ENCODE measurements at regions of chr19 and their contacts with region 1.

Region 1: DNA sequence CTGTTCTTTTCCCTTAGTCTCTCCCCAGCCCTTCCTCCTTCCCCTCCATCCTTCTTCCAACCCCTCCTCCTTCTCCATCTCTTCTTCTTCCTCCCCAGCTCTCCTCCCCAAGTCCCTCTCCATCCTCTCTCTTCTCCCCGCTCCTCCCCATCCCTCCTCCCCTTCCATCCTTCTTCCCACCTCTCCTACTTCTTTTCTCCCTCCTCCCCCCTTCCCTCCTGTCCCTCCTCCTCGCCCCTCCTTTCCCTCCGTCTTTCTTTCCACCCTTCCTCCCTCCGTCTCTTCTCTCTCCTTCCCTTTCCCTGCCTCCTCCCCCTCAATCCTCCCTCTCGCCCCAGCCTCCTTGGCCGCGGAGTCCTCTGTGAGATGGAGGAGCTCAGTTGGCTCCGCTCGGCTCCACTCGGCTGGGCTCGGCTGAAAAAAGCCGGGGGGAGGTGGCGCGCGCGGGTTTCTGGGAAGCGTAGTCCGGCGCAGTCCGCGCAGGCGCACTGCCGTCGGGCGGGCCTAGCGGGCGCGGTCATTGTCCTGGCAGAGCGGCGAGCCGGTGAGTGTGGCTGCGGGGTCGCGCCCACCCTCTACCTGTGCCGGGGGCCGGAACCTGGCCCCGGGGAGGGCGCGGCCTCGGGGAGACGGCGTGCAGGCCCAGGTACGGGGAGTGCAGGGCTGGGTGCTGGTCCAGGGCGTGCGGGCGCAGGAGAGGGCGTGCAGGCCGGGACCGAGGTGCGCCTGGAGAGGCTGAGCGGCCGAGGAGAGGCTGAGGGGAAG is at the start of gene ZNF71:
- H3K4me3 Mint-ChIP-seq: peak within 1 kb of the TSS; percentile 89
- H3K27ac Mint-ChIP-seq: peak within 1 kb of the TSS; percentile 82
- H3K4me1 Mint-ChIP-seq: peaks cover 19% of the 10 kb centered on the region
- H3K27me3 Mint-ChIP-seq: no peaks in the 10 kb centered on the region

Region 2: GRCh38 chr19:56567274-56568120 is 27.5 kb before region 1 on chr19 and contains the start of gene ZNF470:
- intact Hi-C with region 1: loop called (anchors 1 kb)
- H3K4me3 Mint-ChIP-seq: peak within 1 kb of the TSS; percentile 98
- H3K27ac Mint-ChIP-seq: peak within 1 kb of the TSS; percentile 98
- H3K4me1 Mint-ChIP-seq: peaks cover 9% of the 10 kb centered on the region
- H3K27me3 Mint-ChIP-seq: peaks cover 1% of the 10 kb centered on the region

Region 3: GRCh38 chr19:56637976-56638555 is 43.1 kb after region 1 on chr19:
- intact Hi-C with region 1: no loop called
- H3K4me3 Mint-ChIP-seq: no peak overlapping the region
- H3K27ac Mint-ChIP-seq: no peak overlapping the region
- H3K4me1 Mint-ChIP-seq: no peaks in the 10 kb centered on the region
- H3K27me3 Mint-ChIP-seq: no peaks in the 10 kb centered on the region